ENCODE measurements at regions of chr12 and their contacts with region 1.

Region 1: GRCh38 chr12:12673296-12673695 is 22.7 kb downstream of the GPR19 start:
- DNase-seq: peak; percentile 65
- ATAC-seq: peak; percentile 96
- H3K4me3 ChIP-seq: no peak overlapping the region
- H3K27ac ChIP-seq: peak overlapping the region; percentile 48
- H3K4me1 ChIP-seq: peaks cover 16% of the 10 kb centered on the region; the same call in 1 of the 2 replicates
- H3K27me3 ChIP-seq: no peaks in the 10 kb centered on the region
- CTCF ChIP-seq: no peak
- EP300 ChIP-seq: peak in 1 of 2 experiments; percentile 10; a peak in 1 of 4 replicates
- POLR2A ChIP-seq: no peak
- RAD21 ChIP-seq: no peak

Region 2: GRCh38 chr12:12654691-12655460 is 18.4 kb before region 1 on chr12:
- CTCF ChIA-PET with region 1: interaction called, 16 read pairs
- POLR2A ChIA-PET with region 1: interaction called, 5 read pairs
- RAD21 ChIA-PET with region 1: interaction called, 11 read pairs
- SMC1A ChIA-PET with region 1: interaction called, 10 read pairs
- in situ Hi-C with region 1: no loop called
- intact Hi-C with region 1: no loop called
- DNase-seq: no peak
- ATAC-seq: 0 out of 3 replicates have a peak, but pooled peaks have one; percentile 8
- H3K4me3 ChIP-seq: no peak overlapping the region
- H3K27ac ChIP-seq: no peak overlapping the region
- H3K4me1 ChIP-seq: no peaks in the 10 kb centered on the region; the same call in 1 of the 2 replicates
- H3K27me3 ChIP-seq: no peaks in the 10 kb centered on the region
- CTCF ChIP-seq: no peak
- EP300 ChIP-seq: no peak
- POLR2A ChIP-seq: no peak
- RAD21 ChIP-seq: no peak

Region 3: GRCh38 chr12:12661086-12661485 is 12.2 kb before region 1 on chr12:
- CTCF ChIA-PET with region 1: interaction called, 16 read pairs
- POLR2A ChIA-PET with region 1: interaction called, 5 read pairs
- RAD21 ChIA-PET with region 1: interaction called, 11 read pairs
- SMC1A ChIA-PET with region 1: interaction called, 16 read pairs
- in situ Hi-C with region 1: no loop called
- intact Hi-C with region 1: no loop called
- DNase-seq: no peak
- ATAC-seq: no peak
- H3K4me3 ChIP-seq: no peak overlapping the region
- H3K27ac ChIP-seq: no peak overlapping the region
- H3K4me1 ChIP-seq: peaks cover 4% of the 10 kb centered on the region; the same call in 1 of the 2 replicates
- H3K27me3 ChIP-seq: no peaks in the 10 kb centered on the region
- CTCF ChIP-seq: no peak
- EP300 ChIP-seq: no peak
- POLR2A ChIP-seq: no peak
- RAD21 ChIP-seq: no peak

Region 4: DNA sequence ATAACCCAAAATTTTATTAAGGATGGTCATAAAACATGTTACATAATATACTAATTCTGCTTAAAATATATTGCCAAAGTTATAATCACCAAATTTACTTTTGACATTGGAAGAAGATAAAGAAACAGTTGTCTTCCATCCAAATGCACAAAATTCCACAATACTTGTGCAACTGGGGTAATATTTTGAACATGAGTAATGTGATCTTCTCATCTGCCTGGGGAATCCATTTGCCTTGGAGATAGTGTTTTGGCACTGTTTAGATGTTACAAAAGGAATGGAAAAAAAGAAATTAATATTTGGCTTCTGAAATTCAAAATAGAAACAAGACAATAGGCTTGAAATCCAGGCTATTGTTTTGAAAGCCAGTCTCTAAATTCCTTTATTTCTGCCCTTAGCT is 13.6 kb after region 1 on chr12:
- CTCF ChIA-PET with region 1: interaction called, 7 read pairs
- POLR2A ChIA-PET with region 1: interaction called, 12 read pairs
- RAD21 ChIA-PET with region 1: interaction called, 3 read pairs
- SMC1A ChIA-PET with region 1: interaction called, 29 read pairs
- in situ Hi-C with region 1: no loop called
- intact Hi-C with region 1: no loop called
- DNase-seq: no peak
- ATAC-seq: no peak
- H3K4me3 ChIP-seq: no peak overlapping the region
- H3K27ac ChIP-seq: no peak overlapping the region
- H3K4me1 ChIP-seq: peaks cover 29% of the 10 kb centered on the region
- H3K27me3 ChIP-seq: no peaks in the 10 kb centered on the region
- CTCF ChIP-seq: no peak
- EP300 ChIP-seq: no peak
- POLR2A ChIP-seq: no peak
- RAD21 ChIP-seq: no peak

Region 5: DNA sequence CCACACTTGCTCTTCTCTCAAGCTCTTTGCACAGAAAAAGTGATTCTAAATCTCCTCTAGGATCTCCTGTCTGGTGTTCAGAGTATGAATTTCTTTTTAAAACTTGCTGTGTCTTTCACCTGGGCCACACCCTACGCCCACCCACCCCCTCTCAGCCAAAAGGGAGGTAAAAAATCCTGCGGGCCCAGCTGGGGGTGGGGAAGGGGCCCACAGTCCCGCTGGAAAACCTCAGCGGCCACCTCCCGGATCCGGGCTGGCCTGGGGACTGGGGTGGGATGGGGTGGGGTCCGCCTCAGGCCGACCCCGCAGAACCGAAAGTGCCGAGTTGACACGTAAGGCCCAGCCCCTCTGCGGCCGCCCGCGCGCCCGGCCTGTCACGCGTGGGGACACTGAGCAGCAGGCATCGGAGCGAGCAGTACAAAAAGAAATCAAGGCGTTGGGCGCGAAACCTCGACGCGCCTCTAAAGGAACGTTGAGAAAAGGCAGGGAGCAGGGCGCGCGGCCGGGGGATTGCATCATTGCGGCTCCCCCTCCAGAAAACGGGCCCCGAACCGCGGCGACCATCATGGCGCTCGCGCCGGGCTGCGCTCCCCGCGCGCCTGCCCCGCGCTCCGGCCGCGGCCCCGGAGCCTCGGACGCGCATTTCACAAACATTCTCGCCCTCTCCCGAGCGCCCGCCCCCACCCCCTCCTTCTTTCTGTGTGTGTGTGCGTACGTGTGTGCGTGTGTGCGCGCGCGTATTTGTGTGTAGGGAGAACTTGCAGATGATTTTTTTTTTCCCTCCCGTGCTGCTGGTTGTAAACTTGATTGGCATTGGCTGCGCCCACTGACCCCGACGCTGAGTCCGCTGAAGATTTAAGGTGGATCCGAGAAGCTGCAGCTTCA is 51.6 kb after region 1 on chr12:
- CTCF ChIA-PET with region 1: no interaction called
- POLR2A ChIA-PET with region 1: no interaction called
- RAD21 ChIA-PET with region 1: no interaction called
- SMC1A ChIA-PET with region 1: no interaction called
- in situ Hi-C with region 1: no loop called
- intact Hi-C with region 1: no loop called
- DNase-seq: peak; percentile 94
- ATAC-seq: peak; percentile 55
- H3K4me3 ChIP-seq: peak overlapping the region; percentile 97
- H3K27ac ChIP-seq: peak overlapping the region; percentile 97
- H3K4me1 ChIP-seq: peaks cover 14% of the 10 kb centered on the region
- H3K27me3 ChIP-seq: no peaks in the 10 kb centered on the region
- CTCF ChIP-seq: no peak
- EP300 ChIP-seq: no peak
- POLR2A ChIP-seq: peak; percentile 76
- RAD21 ChIP-seq: no peak